Ovary (tissue), 10 donors: ENCODE measurements at regions of chr15 and their contacts with region 1.

Region 1: GRCh38 chr15:92665100-92665555 is 9.6 kb upstream of the FAM174B start:
- DNase-seq: peak; percentile 68 to 82 (median 75)
- H3K4me3 ChIP-seq: no peak overlapping the region
- H3K27ac ChIP-seq: peak overlapping the region; percentile 56 to 67
- H3K4me1 ChIP-seq: peaks cover 22% of the 10 kb centered on the region
- H3K27me3 ChIP-seq: no peaks in the 10 kb centered on the region
- CTCF ChIP-seq: no peak
- EP300 ChIP-seq: no peak
- POLR2A ChIP-seq: no peak

Region 2: DNA sequence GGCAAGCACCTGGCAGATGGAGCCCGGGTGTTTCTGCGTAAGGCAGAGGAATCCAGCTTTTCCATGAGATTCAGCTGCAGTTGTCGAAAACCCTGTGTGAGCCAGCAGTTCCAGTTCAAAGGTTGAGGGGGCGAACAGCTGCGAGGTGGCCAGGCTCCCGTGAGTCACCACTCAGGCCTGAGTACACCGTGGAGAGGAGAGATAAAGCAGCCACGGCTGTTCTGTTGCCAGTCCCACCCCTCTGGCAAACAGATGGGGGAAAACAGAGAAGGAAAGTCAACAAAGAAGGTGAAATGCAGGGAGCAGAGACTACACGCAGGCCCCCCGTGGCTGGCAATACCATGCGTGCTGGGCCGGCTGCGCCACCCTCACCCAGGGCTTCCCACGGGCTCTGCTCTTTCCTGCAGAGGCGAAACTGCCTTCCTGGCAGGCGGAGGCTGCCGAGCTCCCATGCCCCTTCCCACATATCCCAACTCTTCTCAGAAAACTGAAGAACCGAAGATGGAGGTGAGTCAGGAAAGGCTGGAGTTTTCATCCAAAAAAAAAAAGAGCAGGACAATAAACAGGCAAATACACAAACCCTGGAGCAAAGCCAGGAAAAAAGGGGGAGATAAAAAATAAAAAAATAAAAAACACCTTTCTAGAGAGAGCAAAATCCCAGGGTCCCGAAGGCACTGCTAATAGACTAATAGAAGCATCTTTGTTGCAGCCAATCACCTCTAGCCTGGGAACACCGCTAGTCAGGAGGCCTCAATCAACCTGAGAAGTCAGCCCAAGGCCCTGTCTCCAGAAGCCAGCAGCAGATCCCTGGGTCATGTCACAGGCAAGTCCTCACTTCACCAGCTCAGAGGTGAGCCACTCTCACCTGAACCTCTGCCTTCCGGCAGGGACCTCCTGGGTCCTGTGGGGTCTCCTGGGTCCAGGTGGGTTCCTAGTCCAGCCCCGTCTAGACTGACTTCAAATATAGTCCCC is 47.3 kb before region 1 on chr15:
- intact Hi-C with region 1: loop called in 1 of 4 experiments (anchors 5 kb)
- DNase-seq: peak; percentile 84 to 93 (median 92)
- H3K4me3 ChIP-seq: peak overlapping the region; percentile 14
- H3K27ac ChIP-seq: peak overlapping the region; percentile 70 to 82
- H3K4me1 ChIP-seq: peaks cover 17% of the 10 kb centered on the region
- H3K27me3 ChIP-seq: no peaks in the 10 kb centered on the region
- CTCF ChIP-seq: no peak
- EP300 ChIP-seq: no peak
- POLR2A ChIP-seq: peak; percentile 14

Region 3: GRCh38 chr15:92693691-92694331 is 28.7 kb after region 1 on chr15:
- intact Hi-C with region 1: no loop called
- DNase-seq: no peak
- H3K4me3 ChIP-seq: no peak overlapping the region
- H3K27ac ChIP-seq: no peak overlapping the region
- H3K4me1 ChIP-seq: no peaks in the 10 kb centered on the region
- H3K27me3 ChIP-seq: no peaks in the 10 kb centered on the region
- CTCF ChIP-seq: no peak
- EP300 ChIP-seq: no peak
- POLR2A ChIP-seq: no peak

Region 4: GRCh38 chr15:92724144-92724543 is 59.0 kb after region 1 on chr15:
- intact Hi-C with region 1: no loop called
- DNase-seq: no peak
- H3K4me3 ChIP-seq: no peak overlapping the region
- H3K27ac ChIP-seq: no peak overlapping the region
- H3K4me1 ChIP-seq: no peaks in the 10 kb centered on the region
- H3K27me3 ChIP-seq: no peaks in the 10 kb centered on the region
- CTCF ChIP-seq: no peak
- EP300 ChIP-seq: no peak
- POLR2A ChIP-seq: no peak